Dorsolateral prefrontal cortex (tissue), 120 donors: ENCODE measurements at regions of chr3 and their contacts with region 1.

Region 1: GRCh38 chr3:167406875-167407492 is 26.9 kb upstream of the ZBBX start:
- DNase-seq: peak; percentile 8 to 89 (median 72)
- H3K4me3 ChIP-seq: peak overlapping the region in 26 of 59 donors; percentile 1 to 38 (median 22)
- H3K27ac ChIP-seq: peak overlapping the region in 45 of 59 donors; percentile 0 to 80 (median 59)
- H3K27me3 ChIP-seq: no peaks in the 10 kb centered on the region
- CTCF ChIP-seq: peak in 55 of 56 donors; percentile 38 to 93 (median 74)

Region 2: DNA sequence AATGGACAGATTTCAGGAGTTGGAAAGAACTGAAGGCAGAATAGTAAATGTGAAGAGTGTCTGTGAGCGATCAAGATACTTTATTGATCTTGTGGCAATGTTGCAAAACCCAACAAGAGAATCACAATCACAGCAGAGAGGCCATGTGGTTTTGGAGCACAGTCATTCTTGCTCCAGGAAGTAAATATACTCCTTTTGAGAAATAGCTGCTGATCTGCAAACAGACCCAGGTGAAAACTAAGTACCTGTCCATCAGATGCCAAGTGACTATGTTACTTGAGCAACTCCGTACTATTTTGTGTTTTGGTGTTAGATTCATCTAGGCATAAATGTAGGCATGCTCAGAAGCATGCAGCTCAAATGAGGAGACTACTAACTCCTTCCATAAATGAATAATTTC is 654.8 kb before region 1 on chr3:
- intact Hi-C with region 1: no loop called
- DNase-seq: no peak
- H3K4me3 ChIP-seq: no peak overlapping the region
- H3K27ac ChIP-seq: no peak overlapping the region
- H3K27me3 ChIP-seq: no peaks in the 10 kb centered on the region
- CTCF ChIP-seq: no peak

Region 3: GRCh38 chr3:167538081-167538480 is 131.1 kb after region 1 on chr3:
- intact Hi-C with region 1: no loop called
- DNase-seq: no peak
- H3K4me3 ChIP-seq: no peak overlapping the region
- H3K27ac ChIP-seq: no peak overlapping the region
- H3K27me3 ChIP-seq: no peaks in the 10 kb centered on the region
- CTCF ChIP-seq: no peak

Region 4: DNA sequence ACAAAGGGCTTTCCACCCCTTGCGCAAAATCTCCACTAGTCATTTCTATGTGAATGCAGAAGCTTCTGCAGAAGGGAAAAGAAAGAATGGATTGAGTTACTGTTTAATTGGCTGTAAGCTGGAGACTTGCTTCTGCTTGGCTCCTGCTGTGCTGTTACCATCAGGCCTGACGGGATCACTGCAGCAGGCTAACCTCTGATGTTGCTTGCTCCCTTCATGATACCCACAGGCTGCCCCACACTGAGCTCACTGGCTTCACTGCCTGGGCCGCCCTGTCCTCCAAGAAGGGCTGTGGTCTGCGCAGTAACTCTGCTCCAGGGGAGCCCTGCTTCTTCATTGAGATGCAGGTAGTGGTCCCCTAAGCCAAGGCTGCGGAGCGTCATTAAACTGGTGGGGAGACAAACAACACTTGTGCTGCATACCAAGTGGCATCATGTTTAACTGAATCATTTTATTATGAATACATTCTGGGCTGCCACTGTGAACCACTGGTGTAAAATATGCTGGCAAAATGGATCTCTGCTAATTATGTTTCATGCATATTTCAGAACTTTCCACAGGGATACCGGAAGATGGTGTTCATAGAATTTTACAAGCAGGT is 168.1 kb after region 1 on chr3:
- intact Hi-C with region 1: no loop called
- DNase-seq: peak in 5 of 10 donors; percentile 4 to 44 (median 31)
- H3K4me3 ChIP-seq: peak overlapping the region in 11 of 59 donors; percentile 2 to 38 (median 9)
- H3K27ac ChIP-seq: peak overlapping the region in 46 of 59 donors; percentile 0 to 81 (median 56)
- H3K27me3 ChIP-seq: no peaks in the 10 kb centered on the region
- CTCF ChIP-seq: no peak

Region 5: GRCh38 chr3:167684388-167684993 is 277.5 kb after region 1 on chr3:
- intact Hi-C with region 1: loop called (anchors 2 to 10 kb)
- DNase-seq: peak in 2 of 10 donors; percentile 16 to 43
- H3K4me3 ChIP-seq: no peak overlapping the region
- H3K27ac ChIP-seq: no peak overlapping the region
- H3K27me3 ChIP-seq: no peaks in the 10 kb centered on the region
- CTCF ChIP-seq: peak; percentile 64 to 96 (median 84)

Region 6: GRCh38 chr3:167734498-167735232 is 327.7 kb after region 1 on chr3 and contains the start of gene PDCD10:
- intact Hi-C with region 1: loop called (anchors 5 to 10 kb)
- DNase-seq: peak; percentile 97 to 99 (median 99)
- H3K4me3 ChIP-seq: peak within 1 kb of the TSS; percentile 71 to 97 (median 90)
- H3K27ac ChIP-seq: peak within 1 kb of the TSS; percentile 76 to 99 (median 96)
- H3K27me3 ChIP-seq: no peaks in the 10 kb centered on the region
- CTCF ChIP-seq: peak in 20 of 56 donors; percentile 3 to 38 (median 20)
- total RNA-seq, gene PDCD10: 26.3 to 60.2 (median 45.6) TPM

Region 7: GRCh38 chr3:167882067-167882667 is 475.2 kb after region 1 on chr3:
- intact Hi-C with region 1: loop called (anchors 5 kb)
- DNase-seq: no peak
- H3K4me3 ChIP-seq: peak overlapping the region in 42 of 59 donors; percentile 0 to 55 (median 31)
- H3K27ac ChIP-seq: peak overlapping the region in 14 of 59 donors; percentile 5 to 64 (median 30)
- H3K27me3 ChIP-seq: no peaks in the 10 kb centered on the region
- CTCF ChIP-seq: peak; percentile 64 to 99 (median 84)

Region 8: DNA sequence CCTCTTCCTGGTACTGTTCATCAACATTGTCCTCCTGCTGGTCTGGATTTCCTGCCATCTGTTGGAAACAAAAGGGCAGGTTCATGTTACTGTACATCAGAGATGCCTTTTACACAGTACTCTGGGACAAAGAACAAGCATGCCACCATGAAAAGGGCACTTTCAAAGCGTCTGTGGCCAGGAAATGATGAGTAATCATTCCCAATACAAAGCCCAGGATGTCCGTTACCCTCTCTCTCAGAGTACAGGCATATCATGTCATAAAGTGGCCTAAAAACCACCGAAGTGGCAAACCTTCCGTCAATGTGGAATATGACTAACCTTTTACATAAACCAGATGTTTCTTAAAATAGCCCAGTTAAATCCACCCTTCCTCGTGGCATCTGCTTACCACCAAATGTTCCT is 617.6 kb after region 1 on chr3:
- intact Hi-C with region 1: loop called in 1 of 2 experiments (anchors 10 kb)
- DNase-seq: no peak
- H3K4me3 ChIP-seq: no peak overlapping the region
- H3K27ac ChIP-seq: peak overlapping the region in 22 of 59 donors; percentile 1 to 69 (median 34)
- H3K27me3 ChIP-seq: no peaks in the 10 kb centered on the region
- CTCF ChIP-seq: no peak

Region 9: GRCh38 chr3:168047190-168047795 is 640.3 kb after region 1 on chr3:
- intact Hi-C with region 1: loop called in 1 of 2 experiments (anchors 10 kb)
- DNase-seq: no peak
- H3K4me3 ChIP-seq: peak overlapping the region in 1 of 59 donors; percentile 16
- H3K27ac ChIP-seq: peak overlapping the region in 16 of 59 donors; percentile 4 to 59 (median 26)
- H3K27me3 ChIP-seq: no peaks in the 10 kb centered on the region
- CTCF ChIP-seq: peak; percentile 71 to 100 (median 97)